CD4-positive, alpha-beta memory T cell (primary cell): ENCODE measurements at regions of chr19 and their contacts with region 1.

Region 1: GRCh38 chr19:45092747-45093678 is at the start of gene PPP1R37:
- DNase-seq: peak; percentile 92 to 96 (median 95)
- H3K4me3 ChIP-seq: peak within 1 kb of the TSS; percentile 90 to 94
- H3K4me3 Mint-ChIP-seq: peak within 1 kb of the TSS; percentile 91 to 98 (median 92)
- H3K27ac ChIP-seq: peak within 1 kb of the TSS; percentile 80
- H3K27ac Mint-ChIP-seq: peak within 1 kb of the TSS; percentile 94 to 99 (median 97)
- H3K4me1 ChIP-seq: peaks cover 68% of the 10 kb centered on the region
- H3K4me1 Mint-ChIP-seq: peaks cover 42 to 72% (median 57%) of the 10 kb centered on the region in 4 donors
- H3K27me3 ChIP-seq: no peaks in the 10 kb centered on the region
- H3K27me3 Mint-ChIP-seq: no peaks in the 10 kb centered on the region
- total RNA-seq, gene PPP1R37: 25.2 to 26.2 TPM

Region 2: GRCh38 chr19:44890366-44891015 is 202.5 kb before region 1 on chr19:
- CTCF ChIA-PET with region 1: no interaction called
- POLR2A ChIA-PET with region 1: interaction called, 11 read pairs
- intact Hi-C with region 1: no loop called
- DNase-seq: peak; percentile 100
- H3K4me3 ChIP-seq: peak overlapping the region; percentile 36 to 59
- H3K4me3 Mint-ChIP-seq: peak overlapping the region; percentile 80 to 95 (median 89)
- H3K27ac ChIP-seq: peak overlapping the region; percentile 83
- H3K27ac Mint-ChIP-seq: peak overlapping the region; percentile 83 to 97 (median 95)
- H3K4me1 ChIP-seq: peaks cover 22% of the 10 kb centered on the region
- H3K4me1 Mint-ChIP-seq: peaks cover 19 to 35% (median 28%) of the 10 kb centered on the region in 4 donors
- H3K27me3 ChIP-seq: no peaks in the 10 kb centered on the region
- H3K27me3 Mint-ChIP-seq: no peaks in the 10 kb centered on the region

Region 3: GRCh38 chr19:45001087-45001739 is 91.8 kb before region 1 on chr19 and contains the start of gene RELB:
- CTCF ChIA-PET with region 1: no interaction called
- POLR2A ChIA-PET with region 1: interaction called, 23 read pairs
- intact Hi-C with region 1: loop called (anchors 1 kb)
- DNase-seq: peak; percentile 93 to 97 (median 94)
- H3K4me3 ChIP-seq: peak within 1 kb of the TSS; percentile 47 to 69
- H3K4me3 Mint-ChIP-seq: peak within 1 kb of the TSS; percentile 93 to 99 (median 98)
- H3K27ac ChIP-seq: peak within 1 kb of the TSS; percentile 100
- H3K27ac Mint-ChIP-seq: peak within 1 kb of the TSS; percentile 99 to 100 (median 100)
- H3K4me1 ChIP-seq: peaks cover 13% of the 10 kb centered on the region
- H3K4me1 Mint-ChIP-seq: peaks cover 8 to 25% (median 14%) of the 10 kb centered on the region in 4 donors
- H3K27me3 ChIP-seq: no peaks in the 10 kb centered on the region
- H3K27me3 Mint-ChIP-seq: no peaks in the 10 kb centered on the region
- total RNA-seq, gene RELB: 38.8 to 39.8 TPM

Region 4: DNA sequence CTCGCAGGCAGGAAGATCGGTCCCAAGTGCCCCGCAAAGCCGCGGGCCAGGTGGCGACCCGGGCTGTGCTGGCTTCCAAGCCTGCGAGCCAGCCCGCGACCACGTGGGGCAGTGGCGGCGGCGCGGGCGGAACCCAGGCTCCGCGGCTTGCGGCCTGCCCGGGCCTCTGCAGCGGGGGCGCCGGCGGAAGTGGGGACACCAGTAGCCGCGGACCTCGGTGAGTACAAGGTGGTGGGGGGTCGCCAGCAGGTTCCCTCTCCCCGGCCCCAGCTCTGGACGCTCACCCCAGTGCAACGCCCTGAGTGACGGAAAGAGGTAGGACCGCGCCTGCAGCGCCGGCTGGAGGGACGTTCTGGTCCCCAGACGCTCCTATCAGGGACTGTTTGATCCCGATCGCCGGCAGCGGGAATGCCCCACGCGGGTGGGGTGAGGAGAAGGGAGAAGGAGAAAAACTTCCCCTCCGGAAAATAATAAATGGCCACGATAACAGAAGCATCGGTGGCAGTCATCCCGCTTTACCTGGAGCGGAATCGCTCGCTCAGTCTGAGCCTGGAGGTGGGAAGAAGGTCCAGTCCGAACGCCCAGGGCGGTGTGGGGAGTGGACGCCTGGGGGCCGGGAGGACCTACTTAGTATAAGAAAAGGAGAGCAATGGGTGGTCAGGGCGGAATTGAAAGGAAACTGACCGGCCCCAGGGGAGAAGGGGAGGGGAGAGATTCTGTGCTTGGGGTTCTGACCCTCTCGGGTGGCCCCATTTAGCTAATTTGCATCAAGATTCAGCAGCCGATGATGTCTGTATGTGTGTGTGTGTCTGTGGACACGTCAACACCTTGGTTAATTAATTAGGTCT is 13.7 kb before region 1 on chr19 and contains the start of gene GEMIN7:
- CTCF ChIA-PET with region 1: interaction called, 5 read pairs
- POLR2A ChIA-PET with region 1: interaction called, 106 read pairs
- intact Hi-C with region 1: loop called (anchors 1 kb)
- DNase-seq: peak; percentile 66 to 77 (median 72)
- H3K4me3 ChIP-seq: peak within 1 kb of the TSS; percentile 82 to 95
- H3K4me3 Mint-ChIP-seq: peak within 1 kb of the TSS; percentile 89 to 98 (median 93)
- H3K27ac ChIP-seq: peak within 1 kb of the TSS; percentile 80
- H3K27ac Mint-ChIP-seq: peak within 1 kb of the TSS; percentile 84 to 95 (median 88)
- H3K4me1 ChIP-seq: peaks cover 51% of the 10 kb centered on the region
- H3K4me1 Mint-ChIP-seq: peaks cover 25 to 60% (median 44%) of the 10 kb centered on the region in 4 donors
- H3K27me3 ChIP-seq: no peaks in the 10 kb centered on the region
- H3K27me3 Mint-ChIP-seq: no peaks in the 10 kb centered on the region
- total RNA-seq, gene GEMIN7: 15.9 to 17.6 TPM

Region 5: DNA sequence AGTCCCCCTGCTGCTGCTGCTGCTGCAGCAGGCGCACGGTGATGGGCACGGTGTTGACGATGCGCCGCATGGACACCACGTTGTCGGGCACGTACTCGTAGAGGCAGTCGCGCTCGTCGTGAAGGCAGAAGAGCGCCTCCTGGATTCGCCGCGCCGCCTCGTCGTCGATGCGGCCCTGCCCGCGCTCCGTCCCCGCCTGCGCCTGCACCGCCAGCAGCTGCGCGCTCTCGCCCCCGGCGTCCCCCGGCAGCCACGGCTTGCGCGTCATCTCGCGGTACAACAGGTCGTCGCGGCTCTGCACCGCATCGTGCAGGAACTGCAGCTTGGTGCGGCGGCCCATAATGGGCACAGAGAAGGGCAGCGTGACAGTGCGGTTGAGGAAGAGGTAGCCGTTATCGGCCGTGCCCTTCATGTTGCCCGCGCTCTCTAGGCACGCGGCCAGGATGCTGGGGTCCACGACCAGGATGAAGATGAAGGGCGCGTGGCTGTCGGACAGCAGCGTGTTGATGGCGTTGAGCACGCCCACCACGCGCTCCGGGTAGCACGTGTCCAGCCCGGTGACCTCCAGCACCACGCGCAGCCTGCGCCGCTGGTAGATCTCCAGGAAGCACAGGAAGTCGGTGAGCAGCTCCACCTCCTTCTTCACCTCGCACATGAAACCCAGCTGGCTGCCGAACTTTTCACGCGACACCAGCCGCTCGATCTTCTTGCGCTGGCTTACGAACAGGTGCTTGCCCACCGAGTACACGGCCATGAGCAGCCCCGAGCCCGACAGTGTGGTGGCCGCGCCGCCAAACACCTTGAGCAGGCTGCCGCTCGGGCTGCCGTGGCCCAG is 59.7 kb after region 1 on chr19:
- CTCF ChIA-PET with region 1: interaction called, 4 read pairs
- POLR2A ChIA-PET with region 1: interaction called, 20 read pairs
- intact Hi-C with region 1: no loop called
- DNase-seq: peak; percentile 52 to 69 (median 64)
- H3K4me3 ChIP-seq: peak overlapping the region in 1 of 2 donors; percentile 60
- H3K4me3 Mint-ChIP-seq: peak overlapping the region; percentile 79 to 90 (median 82)
- H3K27ac ChIP-seq: no peak overlapping the region
- H3K27ac Mint-ChIP-seq: peak overlapping the region; percentile 73 to 83 (median 76)
- H3K4me1 ChIP-seq: peaks cover 28% of the 10 kb centered on the region
- H3K4me1 Mint-ChIP-seq: peaks cover 14 to 37% (median 25%) of the 10 kb centered on the region in 4 donors
- H3K27me3 ChIP-seq: peaks cover 3% of the 10 kb centered on the region
- H3K27me3 Mint-ChIP-seq: peaks cover 1 to 6% of the 10 kb centered on the region in 2 donors

Region 6: DNA sequence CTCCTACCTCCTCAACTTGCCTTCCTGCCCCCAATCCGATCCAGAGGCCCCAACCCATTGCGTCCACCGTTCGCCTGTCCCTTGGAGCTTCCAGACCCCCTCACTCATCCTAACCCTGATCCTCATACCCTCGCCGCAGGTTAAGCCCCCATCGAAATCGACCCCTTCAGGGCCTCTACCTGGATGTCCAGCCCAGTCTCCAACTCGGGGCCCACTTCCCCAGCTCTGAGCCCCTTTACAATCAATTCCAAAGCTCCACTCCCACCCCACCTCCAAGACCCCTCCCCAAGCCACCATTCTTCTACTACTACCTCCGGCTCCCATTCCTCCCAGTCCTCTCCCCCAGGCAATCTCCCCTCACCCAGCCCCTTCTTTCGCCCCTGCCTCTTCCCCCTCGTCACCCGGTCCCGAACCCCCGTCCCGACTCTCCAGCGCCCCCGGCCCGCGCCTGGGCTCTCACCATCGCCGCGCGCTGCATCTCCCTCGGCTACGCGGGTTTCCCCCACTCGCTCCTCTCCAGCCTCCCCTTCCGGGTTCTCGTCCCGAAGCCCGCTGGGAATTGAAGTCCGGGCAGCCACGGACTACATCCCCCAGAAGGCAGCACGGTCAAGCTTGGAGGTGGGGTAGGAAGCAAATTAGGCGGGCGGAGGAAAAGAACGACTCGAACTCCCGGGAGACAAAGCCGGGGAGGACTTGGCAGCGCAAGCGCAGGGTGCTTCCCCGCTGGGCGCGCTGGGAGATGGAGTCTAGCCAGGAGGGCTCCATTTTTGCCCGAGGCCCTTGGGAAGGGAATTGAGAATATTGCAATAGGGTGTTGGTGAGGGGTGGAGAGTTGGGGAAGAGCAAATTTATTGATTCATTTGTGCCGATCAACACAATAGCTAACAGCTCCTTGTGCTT is 637.6 kb after region 1 on chr19 and contains the start of gene FBXO46:
- CTCF ChIA-PET with region 1: no interaction called
- POLR2A ChIA-PET with region 1: interaction called, 3 read pairs
- intact Hi-C with region 1: loop called (anchors 5 kb)
- DNase-seq: peak; percentile 90 to 97 (median 92)
- H3K4me3 ChIP-seq: peak within 1 kb of the TSS; percentile 68 to 97
- H3K4me3 Mint-ChIP-seq: peak within 1 kb of the TSS; percentile 89 to 100 (median 93)
- H3K27ac ChIP-seq: peak within 1 kb of the TSS; percentile 89
- H3K27ac Mint-ChIP-seq: peak within 1 kb of the TSS; percentile 83 to 96 (median 94)
- H3K4me1 ChIP-seq: peaks cover 35% of the 10 kb centered on the region
- H3K4me1 Mint-ChIP-seq: peaks cover 16 to 51% (median 30%) of the 10 kb centered on the region in 4 donors
- H3K27me3 ChIP-seq: no peaks in the 10 kb centered on the region
- H3K27me3 Mint-ChIP-seq: no peaks in the 10 kb centered on the region
- total RNA-seq, gene FBXO46: 33.1 to 37.3 TPM